Right cardiac atrium (tissue), 5 donors: ENCODE measurements at regions of chr5 and their contacts with region 1.

Region 1: DNA sequence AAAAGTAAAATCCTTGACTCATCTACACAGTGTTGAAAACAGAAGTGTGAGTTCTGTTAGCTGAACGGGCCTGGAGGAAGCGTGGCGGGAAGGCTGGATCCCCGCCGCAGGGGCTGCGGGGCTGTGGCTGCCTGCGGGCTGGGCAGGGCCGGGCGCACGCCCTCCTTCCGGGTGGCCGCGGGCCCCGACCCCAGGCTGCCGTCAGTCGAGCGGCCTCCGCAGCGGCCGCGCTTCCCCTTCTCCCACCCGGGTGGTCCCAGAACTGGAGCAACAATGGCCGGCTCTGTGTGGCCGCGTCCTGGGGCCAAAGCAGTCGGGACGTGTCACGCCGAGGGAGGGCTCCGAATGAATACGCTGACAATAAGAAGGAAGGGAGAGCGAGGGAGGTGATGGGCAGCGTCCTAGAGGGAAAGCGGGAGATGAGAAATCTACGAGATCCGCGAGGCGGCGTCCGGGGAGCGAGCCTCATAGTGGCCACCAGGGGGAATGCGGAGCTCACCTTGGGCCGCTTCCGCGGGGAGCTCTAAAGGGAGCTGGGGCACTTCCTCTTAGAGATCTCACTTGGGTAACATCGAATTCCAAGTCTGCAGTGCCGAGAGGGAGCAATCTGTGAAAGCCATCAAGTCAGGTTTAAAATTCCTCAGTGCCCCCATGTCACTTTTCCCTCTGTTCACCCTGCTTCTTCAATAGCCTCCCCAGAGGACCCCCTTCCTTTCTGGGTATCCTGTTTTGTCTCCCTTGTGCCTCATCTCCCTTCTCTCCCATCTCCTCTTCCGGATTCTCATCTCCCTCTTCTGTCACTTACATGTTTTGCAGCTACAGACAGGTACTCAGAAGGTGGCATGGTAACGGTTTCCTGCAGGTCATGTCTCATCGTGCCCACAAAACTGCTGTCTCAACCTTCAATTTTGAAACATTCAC is 83.9 kb downstream of the SLC1A3 start:
- DNase-seq: peak; percentile 83 to 92 (median 90)
- ATAC-seq: peak; percentile 78 to 83
- H3K4me3 ChIP-seq: peak overlapping the region; percentile 62
- H3K27ac ChIP-seq: peak overlapping the region; percentile 58
- H3K4me1 ChIP-seq: no peaks in the 10 kb centered on the region
- H3K27me3 ChIP-seq: no peaks in the 10 kb centered on the region

Region 2: GRCh38 chr5:36264202-36264760 is 426.0 kb before region 1 on chr5:
- intact Hi-C with region 1: loop called in 1 of 4 experiments (anchors 10 kb)
- DNase-seq: no peak
- ATAC-seq: no peak
- H3K4me3 ChIP-seq: no peak overlapping the region
- H3K27ac ChIP-seq: no peak overlapping the region
- H3K4me1 ChIP-seq: no peaks in the 10 kb centered on the region
- H3K27me3 ChIP-seq: no peaks in the 10 kb centered on the region

Region 3: DNA sequence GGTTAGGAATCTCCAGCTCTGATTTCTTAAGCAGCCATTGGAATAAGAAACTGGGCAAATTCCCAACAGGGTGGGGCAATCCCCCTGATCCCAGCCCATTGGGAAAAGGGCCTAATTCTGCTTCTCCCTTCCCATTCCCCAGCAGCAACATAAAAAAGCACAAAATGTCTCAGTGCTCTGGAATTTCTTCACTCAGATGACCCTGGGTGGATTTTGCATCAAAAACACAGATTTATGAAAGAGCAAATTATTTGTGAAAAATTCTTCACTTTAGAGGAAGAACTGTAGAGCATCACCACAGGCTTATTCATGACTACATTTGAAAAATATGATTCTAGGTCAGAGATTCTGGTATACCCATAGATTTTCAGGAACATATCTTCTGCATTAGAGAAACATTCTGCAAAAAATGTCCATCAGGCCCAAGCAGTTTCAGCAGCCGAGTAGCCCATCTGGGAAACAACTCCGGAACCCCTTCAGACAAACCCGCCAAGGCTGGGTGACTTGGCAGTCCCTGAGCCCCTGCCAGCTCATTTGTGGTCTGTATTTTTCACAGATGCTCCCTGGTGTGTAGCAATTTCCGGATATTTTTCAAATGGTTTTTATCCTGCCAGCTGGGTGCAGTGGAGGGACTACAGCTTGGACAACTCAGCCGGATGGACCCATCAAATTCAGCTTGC is 286.5 kb before region 1 on chr5:
- intact Hi-C with region 1: no loop called
- DNase-seq: peak; percentile 40 to 64 (median 60)
- ATAC-seq: peak; percentile 63 to 80
- H3K4me3 ChIP-seq: no peak overlapping the region
- H3K27ac ChIP-seq: peak overlapping the region; percentile 49
- H3K4me1 ChIP-seq: no peaks in the 10 kb centered on the region
- H3K27me3 ChIP-seq: no peaks in the 10 kb centered on the region

Region 4: DNA sequence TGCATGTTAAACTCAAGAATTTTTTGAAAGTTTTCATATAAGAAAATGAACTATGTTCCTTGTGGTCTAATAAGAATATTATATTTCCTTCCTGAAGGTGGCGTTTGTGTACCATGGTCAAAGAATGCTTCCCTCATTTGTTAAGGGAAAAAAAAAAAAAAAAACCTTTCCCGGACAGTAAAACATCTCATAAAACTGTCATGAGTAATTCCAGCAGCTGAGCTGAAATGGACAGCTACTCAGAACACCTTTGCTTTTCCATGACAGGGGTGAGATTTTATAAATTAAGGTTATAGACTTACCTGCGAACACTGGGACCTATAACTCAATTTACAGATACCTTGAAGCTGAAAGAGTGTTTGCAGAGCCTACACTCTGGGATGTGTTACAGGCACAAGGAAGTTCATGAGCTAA is 275.4 kb before region 1 on chr5:
- intact Hi-C with region 1: loop called in 3 of 4 experiments (anchors 2 to 5 kb)
- DNase-seq: no peak
- ATAC-seq: peak; percentile 48 to 51
- H3K4me3 ChIP-seq: no peak overlapping the region
- H3K27ac ChIP-seq: no peak overlapping the region
- H3K4me1 ChIP-seq: no peaks in the 10 kb centered on the region
- H3K27me3 ChIP-seq: no peaks in the 10 kb centered on the region

Region 5: DNA sequence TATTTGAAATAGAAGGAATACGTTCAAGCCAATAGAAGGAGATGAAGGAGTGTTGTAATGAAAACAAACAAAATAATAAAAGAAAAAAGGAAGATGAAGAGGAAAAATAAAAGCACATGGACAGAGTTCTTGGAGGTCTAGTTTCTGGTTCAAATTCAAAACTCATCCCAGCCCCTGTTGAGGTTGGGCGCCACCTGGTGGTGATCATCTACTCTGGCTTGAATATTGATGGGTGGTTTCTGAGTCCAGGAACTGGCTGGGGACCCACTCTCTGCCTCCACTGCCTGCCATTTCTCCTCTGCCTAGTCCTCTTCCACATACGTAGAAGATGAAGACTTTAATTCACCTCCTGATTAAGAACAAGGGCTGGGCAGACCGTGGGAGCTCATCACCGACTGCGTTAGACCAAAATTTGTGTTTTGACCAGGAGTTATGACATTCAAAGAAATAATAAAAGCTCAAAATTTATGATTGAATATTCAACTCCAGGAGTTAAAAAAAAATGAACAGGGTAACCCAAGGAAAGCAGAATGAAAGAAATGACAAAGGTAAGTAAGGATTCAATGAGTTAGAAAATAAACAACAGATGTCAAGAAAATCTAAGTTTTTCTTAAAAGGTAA is 182.9 kb before region 1 on chr5:
- intact Hi-C with region 1: loop called in 2 of 4 experiments (anchors 10 kb)
- DNase-seq: peak; percentile 73 to 91 (median 85)
- ATAC-seq: peak; percentile 59 to 65
- H3K4me3 ChIP-seq: no peak overlapping the region
- H3K27ac ChIP-seq: no peak overlapping the region
- H3K4me1 ChIP-seq: no peaks in the 10 kb centered on the region
- H3K27me3 ChIP-seq: no peaks in the 10 kb centered on the region

Region 6: GRCh38 chr5:36606428-36607113 is 83.7 kb before region 1 on chr5 and contains the start of gene SLC1A3:
- intact Hi-C with region 1: loop called in 1 of 4 experiments (anchors 10 kb)
- DNase-seq: peak; percentile 53 to 80 (median 56)
- ATAC-seq: peak; percentile 93 to 95
- H3K4me3 ChIP-seq: peak within 1 kb of the TSS; percentile 63
- H3K27ac ChIP-seq: peak within 1 kb of the TSS; percentile 88
- H3K4me1 ChIP-seq: no peaks in the 10 kb centered on the region
- H3K27me3 ChIP-seq: no peaks in the 10 kb centered on the region
- total RNA-seq, gene SLC1A3: 31.1 to 44.5 (median 35.2) TPM

Region 7: GRCh38 chr5:36657563-36657995 is 32.7 kb before region 1 on chr5:
- intact Hi-C with region 1: no loop called
- DNase-seq: peak; percentile 44 to 54 (median 48)
- ATAC-seq: peak; percentile 91
- H3K4me3 ChIP-seq: no peak overlapping the region
- H3K27ac ChIP-seq: peak overlapping the region; percentile 96
- H3K4me1 ChIP-seq: peaks cover 7% of the 10 kb centered on the region
- H3K27me3 ChIP-seq: no peaks in the 10 kb centered on the region